ENCODE measurements at regions of chr14 and their contacts with region 1.

Region 1: GRCh38 chr14:21039585-21040369 is 2.4 kb upstream of the RNASE7 start:
- DNase-seq: peak; percentile 56
- H3K4me3 ChIP-seq: no peak overlapping the region; a peak in 1 of 4 replicates
- H3K27ac ChIP-seq: no peak overlapping the region
- H3K4me1 ChIP-seq: peaks cover 13 to 20% of the 10 kb centered on the region in 2 experiments; a peak in 3 of 4 replicates
- H3K27me3 ChIP-seq: no peaks in the 10 kb centered on the region; the same call in 1 of the 2 replicates
- CTCF ChIP-seq: peak; percentile 67
- EP300 ChIP-seq: no peak
- RAD21 ChIP-seq: peak; percentile 86

Region 2: GRCh38 chr14:20998664-20999366 is 41.0 kb before region 1 on chr14 and contains the start of gene SLC39A2:
- CTCF ChIA-PET with region 1: interaction called, 19 read pairs
- POLR2A ChIA-PET with region 1: no interaction called
- DNase-seq: no peak
- H3K4me3 ChIP-seq: no peak within 1 kb of the TSS
- H3K27ac ChIP-seq: no peak within 1 kb of the TSS
- H3K4me1 ChIP-seq: no peaks in the 10 kb centered on the region; a peak in 1 of 4 replicates
- H3K27me3 ChIP-seq: no peaks in the 10 kb centered on the region
- CTCF ChIP-seq: no peak
- EP300 ChIP-seq: no peak
- RAD21 ChIP-seq: no peak
- polyA plus RNA-seq, gene SLC39A2: not detected in 2 replicates

Region 3: GRCh38 chr14:21024585-21025370 is 15.0 kb before region 1 on chr14 and contains the start of gene NDRG2:
- CTCF ChIA-PET with region 1: interaction called, 248 read pairs
- POLR2A ChIA-PET with region 1: no interaction called
- DNase-seq: peak; percentile 95
- H3K4me3 ChIP-seq: peak within 1 kb of the TSS; percentile 56 to 68
- H3K27ac ChIP-seq: peak within 1 kb of the TSS in 1 of 2 experiments; percentile 55; a peak in 1 of 4 replicates
- H3K4me1 ChIP-seq: peaks cover 0 to 10% of the 10 kb centered on the region in 2 experiments; a peak in 1 of 4 replicates
- H3K27me3 ChIP-seq: peaks cover 4% of the 10 kb centered on the region; the same call in 1 of the 2 replicates
- CTCF ChIP-seq: no peak
- EP300 ChIP-seq: no peak
- RAD21 ChIP-seq: no peak
- polyA plus RNA-seq, gene NDRG2: 15.8 and 15.9 TPM in 2 replicates

Region 4: DNA sequence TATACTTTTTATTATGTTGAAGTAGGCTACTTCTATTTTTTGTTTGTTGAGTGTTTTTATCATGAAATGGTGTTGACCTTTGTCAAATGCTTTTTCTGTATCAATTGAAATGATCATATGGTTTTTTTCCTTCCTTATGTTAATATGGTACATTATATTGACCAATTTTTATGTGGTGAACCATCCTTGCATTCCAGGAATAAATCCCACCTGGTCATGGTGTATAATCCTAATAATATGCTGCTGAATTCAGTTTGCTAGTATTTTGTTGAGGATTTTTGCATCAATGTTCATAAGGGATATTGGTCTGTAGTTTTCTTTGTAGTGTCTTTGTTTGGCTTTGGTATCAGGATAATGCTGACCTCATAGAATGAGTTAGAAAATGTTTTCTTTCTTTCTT is 105.7 kb after region 1 on chr14:
- CTCF ChIA-PET with region 1: no interaction called
- POLR2A ChIA-PET with region 1: no interaction called
- DNase-seq: no peak
- H3K4me3 ChIP-seq: no peak overlapping the region
- H3K27ac ChIP-seq: no peak overlapping the region
- H3K4me1 ChIP-seq: no peaks in the 10 kb centered on the region
- H3K27me3 ChIP-seq: peaks cover 8% of the 10 kb centered on the region; the same call in 1 of the 2 replicates
- CTCF ChIP-seq: no peak
- EP300 ChIP-seq: no peak
- RAD21 ChIP-seq: no peak

Region 5: GRCh38 chr14:21326972-21327371 is 287.2 kb after region 1 on chr14:
- CTCF ChIA-PET with region 1: no interaction called
- POLR2A ChIA-PET with region 1: no interaction called
- DNase-seq: no peak
- H3K4me3 ChIP-seq: no peak overlapping the region
- H3K27ac ChIP-seq: no peak overlapping the region
- H3K4me1 ChIP-seq: no peaks in the 10 kb centered on the region
- H3K27me3 ChIP-seq: peaks cover 16% of the 10 kb centered on the region; the same call in 1 of the 2 replicates
- CTCF ChIP-seq: no peak
- EP300 ChIP-seq: no peak
- RAD21 ChIP-seq: no peak

Measured in SK-N-SH (cell line).